ENCODE measurements at regions of chr11 and their contacts with region 1.

Region 1: DNA sequence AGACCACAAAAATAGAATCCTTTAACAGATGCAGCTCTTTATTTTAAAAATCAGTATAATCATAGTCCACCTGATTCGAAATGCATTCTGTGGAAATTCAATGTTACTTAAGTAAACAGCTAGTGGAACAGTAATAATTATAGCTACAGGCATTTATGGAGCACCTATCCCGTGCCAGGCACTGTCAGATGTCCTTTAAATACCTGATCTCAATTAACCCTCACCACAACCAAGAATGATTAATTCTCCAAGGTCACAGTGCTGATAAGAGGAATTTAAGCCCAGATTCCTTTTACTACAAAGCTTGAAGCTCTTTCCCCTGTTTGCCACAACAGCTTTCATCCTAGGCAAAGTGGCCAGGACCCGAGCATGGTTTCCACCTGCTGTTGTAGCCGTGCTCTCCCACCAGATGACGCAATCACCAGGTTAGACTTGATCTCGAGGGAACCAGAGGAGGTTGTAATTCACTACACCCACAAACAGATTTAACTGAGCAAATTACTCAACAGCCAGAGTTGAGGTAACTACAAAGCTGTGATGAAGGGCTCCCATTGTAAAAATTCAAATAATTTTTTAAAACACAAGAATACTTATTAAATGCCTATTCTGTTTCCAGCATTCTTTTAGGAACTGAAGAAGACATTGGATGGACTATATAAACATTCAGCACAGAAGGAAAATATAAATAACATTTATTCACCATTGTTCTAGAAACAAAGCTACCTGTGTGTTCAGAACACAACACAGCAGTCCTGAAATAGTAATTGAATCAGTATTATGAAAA is 10.3 kb downstream of the PRDM10 start:
- DNase-seq: peak; percentile 71 to 89 (median 87)
- H3K4me3 ChIP-seq: no peak overlapping the region
- H3K27ac ChIP-seq: no peak overlapping the region
- H3K4me1 ChIP-seq: peaks cover 0 to 16% (median 7%) of the 10 kb centered on the region in 4 experiments
- H3K27me3 ChIP-seq: no peaks in the 10 kb centered on the region

Region 2: GRCh38 chr11:129976328-129976727 is 16.0 kb before region 1 on chr11:
- CTCF ChIA-PET with region 1: interaction called, 17 read pairs
- POLR2A ChIA-PET with region 1: no interaction called
- DNase-seq: no peak
- H3K4me3 ChIP-seq: no peak overlapping the region
- H3K27ac ChIP-seq: no peak overlapping the region
- H3K4me1 ChIP-seq: peaks cover 9 to 24% (median 13%) of the 10 kb centered on the region in 4 experiments
- H3K27me3 ChIP-seq: no peaks in the 10 kb centered on the region

Region 3: GRCh38 chr11:130002846-130003716 is 10.7 kb after region 1 on chr11:
- CTCF ChIA-PET with region 1: interaction called, 9 read pairs
- POLR2A ChIA-PET with region 1: interaction called, 12 read pairs
- DNase-seq: peak; percentile 97 to 98 (median 98)
- H3K4me3 ChIP-seq: peak overlapping the region; percentile 70 to 94 (median 84)
- H3K27ac ChIP-seq: peak overlapping the region; percentile 99 to 100
- H3K4me1 ChIP-seq: peaks cover 7 to 46% (median 35%) of the 10 kb centered on the region in 4 experiments
- H3K27me3 ChIP-seq: no peaks in the 10 kb centered on the region

Region 4: GRCh38 chr11:130126516-130126915 is 134.2 kb after region 1 on chr11:
- CTCF ChIA-PET with region 1: interaction called, 105 read pairs
- POLR2A ChIA-PET with region 1: no interaction called
- DNase-seq: no peak
- H3K4me3 ChIP-seq: no peak overlapping the region
- H3K27ac ChIP-seq: no peak overlapping the region
- H3K4me1 ChIP-seq: peaks cover 8 to 17% (median 11%) of the 10 kb centered on the region in 4 experiments
- H3K27me3 ChIP-seq: no peaks in the 10 kb centered on the region

Measured in common myeloid progenitor, CD34-positive (primary cell).